Ovary (tissue), 10 donors: ENCODE measurements at regions of chr1 and their contacts with region 1.

Region 1: GRCh38 chr1:31422505-31423319 is 9.7 kb downstream of the SERINC2 start:
- DNase-seq: peak; percentile 59 to 80 (median 72)
- H3K4me3 ChIP-seq: no peak overlapping the region
- H3K27ac ChIP-seq: no peak overlapping the region
- H3K4me1 ChIP-seq: no peaks in the 10 kb centered on the region
- H3K27me3 ChIP-seq: no peaks in the 10 kb centered on the region
- CTCF ChIP-seq: peak; percentile 80 to 89 (median 82)
- EP300 ChIP-seq: no peak
- POLR2A ChIP-seq: no peak

Region 2: DNA sequence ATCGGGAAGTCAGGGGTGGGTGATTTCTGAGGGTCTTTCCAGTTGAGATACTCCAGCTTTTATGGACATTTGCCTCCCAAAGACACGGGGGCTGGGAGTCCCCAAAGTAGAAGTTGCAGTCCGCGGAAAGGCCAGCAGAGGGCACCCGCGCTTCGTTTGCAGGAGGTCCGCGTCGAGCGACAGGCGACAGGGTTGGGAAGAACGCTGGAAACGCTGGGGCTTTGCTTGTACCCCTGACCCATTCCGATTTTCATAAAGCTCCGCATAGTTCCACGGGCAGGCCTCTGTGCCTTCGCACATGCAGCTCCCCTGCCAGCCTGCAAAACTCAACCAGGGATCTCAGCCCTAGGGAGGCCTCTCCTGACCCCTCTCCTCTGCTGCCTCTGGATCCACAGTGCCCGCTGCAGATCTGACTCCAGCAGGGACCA is 620.9 kb before region 1 on chr1:
- intact Hi-C with region 1: loop called in 1 of 4 experiments (anchors 10 kb)
- DNase-seq: peak; percentile 67 to 89 (median 84)
- H3K4me3 ChIP-seq: no peak overlapping the region
- H3K27ac ChIP-seq: no peak overlapping the region
- H3K4me1 ChIP-seq: peaks cover 2% of the 10 kb centered on the region
- H3K27me3 ChIP-seq: no peaks in the 10 kb centered on the region
- CTCF ChIP-seq: peak; percentile 81 to 91 (median 91)
- EP300 ChIP-seq: no peak
- POLR2A ChIP-seq: no peak

Region 3: GRCh38 chr1:31182352-31182751 is 240.4 kb before region 1 on chr1:
- intact Hi-C with region 1: loop called (anchors 2 to 10 kb)
- DNase-seq: peak; percentile 60 to 93 (median 77)
- H3K4me3 ChIP-seq: no peak overlapping the region
- H3K27ac ChIP-seq: no peak overlapping the region
- H3K4me1 ChIP-seq: no peaks in the 10 kb centered on the region
- H3K27me3 ChIP-seq: no peaks in the 10 kb centered on the region
- CTCF ChIP-seq: no peak
- EP300 ChIP-seq: no peak
- POLR2A ChIP-seq: no peak